HCT116 (cell line): ENCODE measurements at regions of chr12 and their contacts with region 1.

Region 1: DNA sequence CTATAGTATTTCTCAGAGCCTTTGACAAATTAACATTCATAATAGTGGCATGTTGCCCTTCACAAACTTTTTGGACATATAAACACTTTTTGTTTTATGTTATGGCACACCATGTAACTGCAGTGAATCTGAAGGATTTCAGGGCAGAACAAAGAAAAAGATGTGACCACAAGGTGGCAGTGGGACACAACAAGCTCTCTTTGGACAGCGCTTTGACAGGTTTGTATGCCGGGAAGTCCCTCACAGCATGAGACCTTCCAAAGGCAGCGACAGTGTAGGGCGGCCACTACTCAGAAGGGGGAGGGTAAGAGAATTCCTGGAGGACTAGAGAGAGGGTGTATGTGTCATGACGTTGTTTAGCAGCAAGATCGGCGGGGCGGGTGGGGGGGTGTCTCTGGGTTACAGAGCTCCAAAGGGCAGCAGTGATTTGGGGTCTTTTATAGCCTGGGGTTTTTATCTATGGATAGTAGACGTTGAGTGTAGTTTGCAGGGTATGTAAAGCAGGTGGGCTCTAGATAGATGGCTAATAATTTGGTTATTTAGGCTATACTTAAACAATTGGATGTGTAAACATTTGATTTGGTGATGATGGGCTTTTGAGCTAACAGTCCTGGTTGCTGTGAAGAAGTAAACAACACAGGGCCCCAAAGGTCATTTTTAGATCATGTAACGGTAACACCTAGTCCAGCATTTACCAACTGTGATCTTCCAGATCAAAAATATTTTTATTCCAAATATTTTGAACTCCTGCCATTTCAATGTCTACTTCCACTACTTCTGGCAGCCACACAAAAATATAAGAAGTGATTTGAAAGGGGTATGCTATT is 22.9 kb downstream of the ETFBKMT start:
- DNase-seq: peak; percentile 85
- ATAC-seq: peak; percentile 97
- H3K4me3 ChIP-seq: no peak overlapping the region
- H3K27ac ChIP-seq: no peak overlapping the region
- H3K4me1 ChIP-seq: peaks cover 9 to 21% of the 10 kb centered on the region in 2 experiments; a peak in 3 of 4 replicates
- H3K27me3 ChIP-seq: no peaks in the 10 kb centered on the region
- CTCF ChIP-seq: peak; percentile 68 to 78 (median 77); a peak in 5 of 6 replicates
- POLR2A ChIP-seq: no peak
- RAD21 ChIP-seq: peak; percentile 97

Region 2: DNA sequence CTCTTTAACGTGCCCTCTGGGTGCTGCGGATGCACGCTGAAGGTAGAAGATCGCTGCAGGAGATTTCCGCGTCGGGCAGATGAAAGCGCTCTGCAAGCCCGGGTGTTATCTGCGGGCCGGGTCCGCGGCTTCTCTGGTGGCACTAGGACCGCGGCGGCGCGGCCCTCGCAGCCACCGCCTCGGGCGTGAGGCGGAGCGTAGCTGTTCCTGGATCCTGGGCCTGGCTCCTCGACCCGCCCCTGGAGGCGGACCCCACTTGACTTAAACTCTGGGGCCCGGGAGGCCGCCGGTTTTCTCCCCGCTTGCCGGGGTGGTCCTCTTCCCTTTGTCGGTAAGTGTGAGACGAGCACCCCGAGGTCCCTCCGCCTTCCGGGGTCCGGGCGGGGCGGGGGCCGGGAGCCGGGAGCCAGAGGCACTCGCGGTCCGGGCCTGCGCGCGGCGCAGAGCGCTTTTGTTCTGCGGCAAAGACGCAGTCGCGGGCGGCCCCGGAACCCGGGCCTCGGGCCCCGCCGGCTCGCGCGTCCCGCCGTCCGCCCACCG is 276.9 kb after region 1 on chr12 and contains the start of gene RESF1:
- CTCF ChIA-PET with region 1: no interaction called
- POLR2A ChIA-PET with region 1: no interaction called
- RAD21 ChIA-PET with region 1: no interaction called
- intact Hi-C with region 1: loop called (anchors 2 kb)
- DNase-seq: peak; percentile 83
- ATAC-seq: peak; percentile 96
- H3K4me3 ChIP-seq: peak within 1 kb of the TSS; percentile 68 to 87
- H3K27ac ChIP-seq: peak within 1 kb of the TSS; percentile 86
- H3K4me1 ChIP-seq: peaks cover 24 to 41% of the 10 kb centered on the region in 2 experiments
- H3K27me3 ChIP-seq: no peaks in the 10 kb centered on the region
- CTCF ChIP-seq: no peak
- POLR2A ChIP-seq: peak; percentile 45
- RAD21 ChIP-seq: peak; percentile 27
- total RNA-seq, gene RESF1: 64.7 TPM

Region 3: DNA sequence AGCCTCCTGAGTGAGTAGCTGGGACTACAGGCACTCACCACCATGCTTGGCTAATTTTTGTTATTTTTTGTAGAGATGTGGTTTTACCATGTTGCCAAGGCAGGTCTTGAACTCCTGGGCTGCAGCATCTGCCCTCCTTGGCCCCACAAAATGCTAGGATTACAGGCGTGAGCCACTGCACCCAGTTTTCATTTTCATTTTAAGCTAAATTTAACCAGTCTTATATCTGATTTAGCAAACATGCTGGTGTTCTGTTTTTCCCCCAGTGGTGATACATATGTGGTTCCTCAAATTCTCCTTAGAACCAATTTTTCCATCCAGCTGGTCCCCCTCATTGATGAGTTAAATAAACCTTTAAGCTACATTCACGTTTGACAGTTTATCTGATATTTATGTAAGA is 380.5 kb after region 1 on chr12:
- CTCF ChIA-PET with region 1: interaction called, 3 read pairs
- POLR2A ChIA-PET with region 1: no interaction called
- RAD21 ChIA-PET with region 1: no interaction called
- intact Hi-C with region 1: loop called (anchors 5 kb)
- DNase-seq: no peak
- ATAC-seq: no peak
- H3K4me3 ChIP-seq: no peak overlapping the region
- H3K27ac ChIP-seq: no peak overlapping the region
- H3K4me1 ChIP-seq: no peaks in the 10 kb centered on the region
- H3K27me3 ChIP-seq: no peaks in the 10 kb centered on the region
- CTCF ChIP-seq: no peak
- POLR2A ChIP-seq: no peak
- RAD21 ChIP-seq: no peak

Region 4: GRCh38 chr12:32302218-32303173 is 620.1 kb after region 1 on chr12:
- CTCF ChIA-PET with region 1: no interaction called
- POLR2A ChIA-PET with region 1: interaction called, 5 read pairs
- RAD21 ChIA-PET with region 1: no interaction called
- intact Hi-C with region 1: loop called (anchors 2 kb)
- DNase-seq: peak; percentile 45
- ATAC-seq: peak; percentile 98
- H3K4me3 ChIP-seq: no peak overlapping the region
- H3K27ac ChIP-seq: no peak overlapping the region
- H3K4me1 ChIP-seq: no peaks in the 10 kb centered on the region
- H3K27me3 ChIP-seq: no peaks in the 10 kb centered on the region
- CTCF ChIP-seq: peak; percentile 76 to 85 (median 77); a peak in 5 of 6 replicates
- POLR2A ChIP-seq: no peak
- RAD21 ChIP-seq: peak; percentile 90

Region 5: GRCh38 chr12:32312049-32312670 is 629.8 kb after region 1 on chr12:
- CTCF ChIA-PET with region 1: interaction called, 13 read pairs
- POLR2A ChIA-PET with region 1: no interaction called
- RAD21 ChIA-PET with region 1: no interaction called
- intact Hi-C with region 1: no loop called
- DNase-seq: peak; percentile 55
- ATAC-seq: peak; percentile 86
- H3K4me3 ChIP-seq: no peak overlapping the region
- H3K27ac ChIP-seq: no peak overlapping the region
- H3K4me1 ChIP-seq: no peaks in the 10 kb centered on the region
- H3K27me3 ChIP-seq: no peaks in the 10 kb centered on the region
- CTCF ChIP-seq: peak; percentile 48 to 96 (median 66)
- POLR2A ChIP-seq: no peak
- RAD21 ChIP-seq: peak; percentile 63